ENCODE measurements at regions of chr5 and their contacts with region 1.

Region 1: DNA sequence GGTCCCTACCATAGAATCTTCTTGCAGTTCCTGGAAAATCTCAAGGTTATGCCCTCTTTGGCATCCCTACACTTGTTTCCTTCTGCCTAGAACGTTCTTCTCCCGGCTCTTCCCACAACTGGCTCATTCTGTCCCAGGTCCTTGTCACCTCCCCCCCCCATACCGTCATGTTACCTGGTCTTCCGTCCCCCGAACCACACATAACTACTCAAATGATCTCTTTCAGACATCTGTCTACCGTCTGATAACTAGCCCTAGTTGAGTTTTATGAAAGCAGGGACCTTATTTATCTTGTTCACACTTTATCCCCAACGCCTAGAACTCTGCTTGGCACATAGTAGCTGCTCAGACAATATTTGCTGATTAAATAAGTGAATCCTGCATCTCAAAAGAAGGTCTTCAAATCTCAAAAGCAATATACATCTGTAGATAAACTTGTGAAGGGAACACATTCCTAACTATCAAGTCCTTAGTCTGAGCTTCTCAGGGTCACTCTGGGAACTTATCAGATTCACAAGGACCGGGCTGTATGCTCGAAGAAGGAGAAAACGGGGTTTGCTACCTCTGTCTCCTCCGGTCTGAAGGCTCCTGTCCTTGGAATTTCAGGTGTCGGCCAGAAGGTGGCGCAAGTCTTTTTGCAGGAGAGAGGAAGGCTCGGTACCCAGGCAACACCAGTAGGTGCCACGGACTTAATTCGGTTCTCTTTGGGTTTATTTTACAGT is 30.0 kb downstream of the LCP2 start:
- DNase-seq: peak; percentile 33 to 59
- ATAC-seq: peak; percentile 61 to 70
- H3K4me3 ChIP-seq: no peak overlapping the region
- H3K27ac ChIP-seq: peak overlapping the region in 2 of 4 donors; percentile 2 to 13
- H3K4me1 ChIP-seq: peaks cover 5 to 6% of the 10 kb centered on the region in 2 donors
- H3K27me3 ChIP-seq: no peaks in the 10 kb centered on the region
- CTCF ChIP-seq: peak; percentile 55 to 68 (median 64)
- POLR2A ChIP-seq: no peak

Region 2: GRCh38 chr5:170278611-170279452 is 11.2 kb after region 1 on chr5:
- in situ Hi-C with region 1: no loop called
- intact Hi-C with region 1: no loop called
- DNase-seq: peak in 1 of 2 donors; percentile 40
- ATAC-seq: peak in 1 of 2 donors; percentile 26
- H3K4me3 ChIP-seq: no peak overlapping the region
- H3K27ac ChIP-seq: peak overlapping the region in 2 of 4 donors; percentile 41 to 64
- H3K4me1 ChIP-seq: peaks cover 0 to 10% of the 10 kb centered on the region in 2 donors
- H3K27me3 ChIP-seq: no peaks in the 10 kb centered on the region
- CTCF ChIP-seq: no peak
- POLR2A ChIP-seq: no peak

Region 3: GRCh38 chr5:170338933-170339779 is 71.6 kb after region 1 on chr5:
- in situ Hi-C with region 1: no loop called
- intact Hi-C with region 1: loop called (anchors 5 kb)
- DNase-seq: no peak
- ATAC-seq: no peak
- H3K4me3 ChIP-seq: no peak overlapping the region
- H3K27ac ChIP-seq: no peak overlapping the region
- H3K4me1 ChIP-seq: no peaks in the 10 kb centered on the region
- H3K27me3 ChIP-seq: no peaks in the 10 kb centered on the region
- CTCF ChIP-seq: peak in 2 of 5 experiments; percentile 9 to 12
- POLR2A ChIP-seq: no peak

Region 4: DNA sequence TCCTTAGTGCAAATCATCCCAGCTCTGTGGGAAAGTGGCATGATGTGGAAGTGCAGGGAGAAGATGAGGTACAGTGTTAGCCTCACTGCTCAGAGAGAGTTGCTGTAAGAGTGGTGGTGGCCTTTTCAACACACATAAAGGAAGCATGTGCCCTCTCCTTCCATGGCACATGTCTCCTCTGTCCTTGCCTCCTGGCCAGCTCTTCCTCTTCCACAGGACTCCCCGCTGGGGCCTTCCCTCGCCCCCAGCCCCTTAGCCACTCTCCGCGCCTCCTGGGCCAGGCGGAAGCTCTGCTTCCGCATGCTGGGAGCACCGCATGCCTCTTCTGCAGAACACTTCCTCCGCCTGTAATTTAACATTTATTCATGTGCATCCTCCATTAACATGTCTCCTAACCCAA is 126.4 kb after region 1 on chr5:
- in situ Hi-C with region 1: no loop called
- intact Hi-C with region 1: no loop called
- DNase-seq: no peak
- ATAC-seq: no peak
- H3K4me3 ChIP-seq: no peak overlapping the region
- H3K27ac ChIP-seq: no peak overlapping the region
- H3K4me1 ChIP-seq: no peaks in the 10 kb centered on the region
- H3K27me3 ChIP-seq: peaks cover 0 to 8% (median 4%) of the 10 kb centered on the region in 3 donors
- CTCF ChIP-seq: no peak
- POLR2A ChIP-seq: no peak

Region 5: DNA sequence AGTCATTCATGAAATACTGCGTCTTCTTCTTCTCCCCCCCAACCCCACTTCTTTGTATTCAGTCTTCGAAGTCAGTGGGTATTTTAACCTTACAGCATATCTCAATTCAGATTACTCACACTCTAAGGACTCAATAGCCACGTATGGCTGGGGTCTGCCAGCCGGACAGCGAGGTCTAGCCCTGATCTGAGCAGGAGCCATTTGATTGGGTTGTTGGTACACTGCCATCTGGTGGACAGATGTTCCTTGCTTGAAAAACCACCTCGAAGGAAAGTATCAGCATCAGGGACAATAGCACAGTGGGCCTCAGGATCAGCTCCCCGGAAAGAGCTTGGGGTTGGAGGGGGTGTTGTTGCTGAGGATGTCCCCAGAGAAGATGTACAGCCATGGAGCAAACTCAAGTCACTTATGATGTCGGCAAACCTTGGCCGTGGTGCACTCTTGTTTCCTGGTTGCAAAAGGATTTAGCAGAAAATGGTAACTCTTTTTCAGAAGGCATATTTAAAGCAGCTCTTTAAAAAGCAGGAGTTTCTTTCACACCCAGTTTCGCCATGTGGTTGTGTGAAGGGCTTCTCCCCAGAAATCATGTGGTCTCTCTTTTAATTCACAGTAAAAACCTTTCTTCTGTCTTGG is 153.3 kb after region 1 on chr5:
- in situ Hi-C with region 1: loop called in 1 of 4 experiments (anchors 5 kb)
- intact Hi-C with region 1: loop called (anchors 1 kb)
- DNase-seq: peak in 1 of 2 donors; percentile 32
- ATAC-seq: peak; percentile 49 to 50
- H3K4me3 ChIP-seq: no peak overlapping the region
- H3K27ac ChIP-seq: no peak overlapping the region
- H3K4me1 ChIP-seq: no peaks in the 10 kb centered on the region
- H3K27me3 ChIP-seq: no peaks in the 10 kb centered on the region
- CTCF ChIP-seq: peak; percentile 20 to 67 (median 45)
- POLR2A ChIP-seq: no peak

Measured in gastrocnemius medialis (tissue), 4 donors.